HEK293 (cell line): ENCODE measurements at regions of chr10 and their contacts with region 1.

Region 1: DNA sequence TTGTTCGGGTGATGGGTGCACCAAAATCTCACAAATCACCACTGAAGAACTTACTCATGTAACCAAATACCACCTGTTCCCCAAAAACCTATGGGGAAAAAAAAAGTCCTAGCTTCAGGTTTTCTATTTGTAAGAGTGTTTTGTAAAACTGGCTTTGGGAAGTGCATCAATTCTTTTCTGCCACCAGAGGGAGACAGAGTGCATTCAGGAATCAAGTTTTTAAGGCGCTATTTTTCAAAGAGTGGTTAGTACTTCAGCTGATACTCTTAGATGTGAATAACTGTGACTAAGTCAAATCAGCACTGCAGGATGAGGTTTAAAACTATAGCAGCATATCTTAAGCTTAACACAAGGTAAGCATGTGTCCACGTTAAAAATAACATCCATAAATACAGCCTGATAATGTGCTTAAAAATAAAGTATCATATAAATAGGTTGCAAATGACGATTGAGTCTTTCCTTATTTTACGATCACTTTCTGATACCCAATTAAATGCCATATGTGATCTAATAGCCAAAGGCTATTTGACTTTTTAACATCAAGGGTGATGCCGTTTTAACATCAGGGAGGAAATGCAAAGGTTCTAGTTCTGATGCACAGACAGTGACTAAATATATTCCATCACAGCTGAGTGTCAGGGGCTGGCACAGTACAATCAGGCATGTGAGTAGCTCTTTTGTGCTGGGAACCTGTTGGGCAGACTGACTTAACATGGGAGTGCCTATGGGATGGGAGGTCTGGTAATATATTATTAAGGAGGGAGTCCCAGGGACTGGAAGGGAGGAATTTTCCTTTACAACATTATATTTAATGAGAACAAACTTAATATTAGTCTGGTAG is 10.6 kb upstream of the LYZL2 start:
- H3K4me3 ChIP-seq: no peak overlapping the region
- H3K27ac ChIP-seq: no peak overlapping the region
- H3K4me1 ChIP-seq: peaks cover 6% of the 10 kb centered on the region
- CTCF ChIP-seq: no peak

Region 2: GRCh38 chr10:30447125-30447799 is 192.9 kb before region 1 on chr10:
- CTCF ChIA-PET with region 1: no interaction called
- POLR2A ChIA-PET with region 1: no interaction called
- H3K4me3 ChIP-seq: no peak overlapping the region
- H3K27ac ChIP-seq: no peak overlapping the region
- H3K4me1 ChIP-seq: no peaks in the 10 kb centered on the region
- CTCF ChIP-seq: no peak

Region 3: GRCh38 chr10:30502266-30503060 is 137.7 kb before region 1 on chr10:
- CTCF ChIA-PET with region 1: no interaction called
- POLR2A ChIA-PET with region 1: no interaction called
- H3K4me3 ChIP-seq: no peak overlapping the region
- H3K27ac ChIP-seq: no peak overlapping the region
- H3K4me1 ChIP-seq: no peaks in the 10 kb centered on the region
- CTCF ChIP-seq: no peak

Region 4: DNA sequence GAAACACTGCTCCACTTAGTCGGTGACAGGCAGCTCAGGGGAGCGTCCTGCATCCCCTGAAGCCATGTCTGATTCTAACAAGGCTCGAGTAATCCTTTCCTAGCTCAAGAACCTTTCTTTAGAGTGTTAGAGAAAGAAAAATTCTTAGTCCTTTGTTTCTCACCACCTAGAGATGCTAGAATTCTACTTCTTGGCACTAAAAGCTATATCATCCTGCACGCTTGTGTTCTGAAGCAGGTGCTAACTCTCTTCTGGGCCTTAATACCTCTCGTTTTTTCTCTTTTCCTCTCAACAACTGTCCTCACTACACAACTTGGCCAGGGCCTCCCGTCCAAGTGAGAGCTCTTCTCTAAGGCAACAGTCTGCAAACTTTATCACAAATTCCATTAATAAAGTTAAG is 10.5 kb before region 1 on chr10 and contains the start of gene LYZL2:
- CTCF ChIA-PET with region 1: interaction called, 10 read pairs
- POLR2A ChIA-PET with region 1: no interaction called
- H3K4me3 ChIP-seq: no peak within 1 kb of the TSS
- H3K27ac ChIP-seq: no peak within 1 kb of the TSS
- H3K4me1 ChIP-seq: no peaks in the 10 kb centered on the region
- CTCF ChIP-seq: no peak

Region 5: GRCh38 chr10:30671026-30671616 is 31.0 kb after region 1 on chr10:
- CTCF ChIA-PET with region 1: interaction called, 21 read pairs
- POLR2A ChIA-PET with region 1: no interaction called
- H3K4me3 ChIP-seq: no peak overlapping the region
- H3K27ac ChIP-seq: no peak overlapping the region
- H3K4me1 ChIP-seq: no peaks in the 10 kb centered on the region
- CTCF ChIP-seq: peak; percentile 40; the same call in 1 of the 2 replicates